Calu3 (cell line): ENCODE measurements at regions of chr11 and their contacts with region 1.

Region 1: GRCh38 chr11:12963792-12964536 is 45.2 kb upstream of the RASSF10 start:
- DNase-seq: peak; percentile 84
- H3K4me3 Mint-ChIP-seq: no peak overlapping the region
- H3K27ac Mint-ChIP-seq: no peak overlapping the region
- H3K4me1 Mint-ChIP-seq: peaks cover 16% of the 10 kb centered on the region
- H3K27me3 Mint-ChIP-seq: no peaks in the 10 kb centered on the region
- CTCF ChIP-seq: peak; percentile 87

Region 2: GRCh38 chr11:13009921-13010748 is 46.2 kb after region 1 on chr11:
- CTCF ChIA-PET with region 1: interaction called, 8 read pairs
- intact Hi-C with region 1: loop called (anchors 5 kb)
- DNase-seq: peak; percentile 51
- H3K4me3 Mint-ChIP-seq: peak overlapping the region; percentile 83
- H3K27ac Mint-ChIP-seq: peak overlapping the region; percentile 26
- H3K4me1 Mint-ChIP-seq: peaks cover 62% of the 10 kb centered on the region
- H3K27me3 Mint-ChIP-seq: no peaks in the 10 kb centered on the region
- CTCF ChIP-seq: no peak

Region 3: DNA sequence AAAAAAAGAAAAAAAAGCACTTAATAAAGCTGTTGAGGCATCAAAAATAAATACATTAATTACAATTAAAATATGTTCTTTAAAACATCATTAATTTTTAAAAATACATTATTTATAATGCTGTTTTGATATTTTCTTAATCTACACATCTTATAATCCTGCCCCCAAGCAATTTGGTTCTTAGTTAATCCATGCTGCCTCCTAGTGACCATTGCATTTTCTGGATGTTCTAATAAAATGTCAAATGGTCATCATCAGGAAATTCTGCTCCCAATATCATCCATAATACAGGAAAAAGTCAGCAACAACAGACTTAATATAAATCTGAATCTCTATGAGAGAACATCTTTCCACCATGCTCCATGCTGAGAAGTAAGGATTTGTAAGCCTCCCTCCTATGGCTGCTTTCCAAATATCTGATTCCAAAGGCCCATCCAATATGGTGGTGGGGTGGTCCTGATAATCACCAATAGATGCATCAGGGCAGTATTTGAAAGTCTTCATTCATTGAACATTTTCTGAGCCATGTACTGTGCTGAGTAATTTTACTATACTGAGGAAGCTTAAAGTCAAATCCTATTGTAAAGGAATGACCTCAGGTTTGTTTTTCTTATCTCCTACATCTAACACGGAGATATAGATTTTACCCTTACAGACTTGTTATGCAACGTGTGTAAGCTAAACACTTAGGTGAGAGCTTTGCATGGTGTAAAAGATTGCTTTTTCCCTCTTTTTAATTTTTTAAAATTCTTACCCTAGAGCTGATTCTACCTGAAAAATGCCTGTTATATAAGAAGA is 189.0 kb after region 1 on chr11:
- CTCF ChIA-PET with region 1: interaction called, 9 read pairs
- intact Hi-C with region 1: loop called (anchors 1 kb)
- DNase-seq: no peak
- H3K4me3 Mint-ChIP-seq: no peak overlapping the region
- H3K27ac Mint-ChIP-seq: no peak overlapping the region
- H3K4me1 Mint-ChIP-seq: peaks cover 62% of the 10 kb centered on the region
- H3K27me3 Mint-ChIP-seq: no peaks in the 10 kb centered on the region
- CTCF ChIP-seq: no peak

Region 4: DNA sequence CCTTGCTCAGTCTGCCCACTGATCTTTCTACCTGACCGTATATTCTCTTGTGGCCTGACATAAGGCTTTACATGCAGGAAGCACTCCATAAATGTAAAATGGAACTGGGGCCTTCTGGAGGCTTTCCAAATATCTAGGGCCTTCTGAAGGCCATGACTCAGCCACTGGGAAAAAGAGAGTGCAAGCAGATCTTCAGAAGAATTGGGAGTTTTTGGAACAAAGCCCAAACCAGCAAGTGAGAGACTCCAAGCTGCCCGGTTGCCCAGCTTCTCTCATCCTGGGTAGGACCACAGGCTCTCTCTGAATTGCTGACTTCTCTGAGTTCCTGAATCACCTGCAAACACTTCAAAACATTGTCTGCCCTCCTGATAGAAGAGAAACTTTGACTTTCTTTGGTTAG is 205.7 kb after region 1 on chr11:
- CTCF ChIA-PET with region 1: interaction called, 5 read pairs
- intact Hi-C with region 1: loop called (anchors 5 kb)
- DNase-seq: peak; percentile 18
- H3K4me3 Mint-ChIP-seq: no peak overlapping the region
- H3K27ac Mint-ChIP-seq: no peak overlapping the region
- H3K4me1 Mint-ChIP-seq: peaks cover 39% of the 10 kb centered on the region
- H3K27me3 Mint-ChIP-seq: no peaks in the 10 kb centered on the region
- CTCF ChIP-seq: no peak

Region 5: DNA sequence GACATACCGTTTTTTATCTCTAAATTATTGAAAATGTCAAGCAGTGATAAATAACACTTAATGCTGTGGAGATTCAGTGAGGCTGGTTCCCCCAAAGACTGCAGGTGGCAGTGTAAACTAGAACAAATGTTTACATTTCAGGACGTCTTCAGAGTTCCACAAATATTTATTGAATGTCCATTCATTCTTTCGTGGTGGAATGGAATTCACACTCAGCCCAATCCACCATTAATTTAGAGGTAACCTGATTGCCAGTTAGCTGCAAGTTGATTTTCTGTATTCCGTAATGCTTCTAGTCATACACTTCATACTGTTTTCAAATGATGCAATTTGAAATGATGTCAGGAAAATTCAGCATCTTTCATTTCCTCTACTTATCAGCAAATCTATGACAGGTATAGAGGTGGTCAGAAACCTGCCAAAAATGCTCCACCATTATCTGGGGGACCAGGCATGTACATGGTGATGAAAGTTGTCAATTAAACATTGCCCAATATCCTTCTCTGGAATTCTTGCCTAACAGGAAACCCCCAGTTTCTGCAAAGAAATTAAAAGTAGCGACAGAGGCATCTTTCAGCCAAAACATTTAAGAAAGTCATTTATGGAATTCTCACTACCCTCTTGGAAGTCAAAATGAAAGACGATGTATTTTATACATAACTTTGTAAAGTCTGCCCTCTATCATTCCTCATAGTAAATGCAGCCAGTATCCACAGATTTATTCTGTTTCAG is 219.3 kb after region 1 on chr11:
- CTCF ChIA-PET with region 1: interaction called, 9 read pairs
- intact Hi-C with region 1: loop called (anchors 1 kb)
- DNase-seq: no peak
- H3K4me3 Mint-ChIP-seq: peak overlapping the region; percentile 29
- H3K27ac Mint-ChIP-seq: no peak overlapping the region
- H3K4me1 Mint-ChIP-seq: no peaks in the 10 kb centered on the region
- H3K27me3 Mint-ChIP-seq: no peaks in the 10 kb centered on the region
- CTCF ChIP-seq: peak; percentile 42